ENCODE measurements at regions of chr20 and their contacts with region 1.

Region 1: GRCh38 chr20:407133-407952 is 756 bp upstream of the RBCK1 start:
- DNase-seq: peak; percentile 89 to 90
- H3K4me3 ChIP-seq: peak overlapping the region; percentile 45
- H3K4me3 Mint-ChIP-seq: peak overlapping the region; percentile 77
- H3K27ac Mint-ChIP-seq: peak overlapping the region; percentile 83
- H3K4me1 ChIP-seq: peaks cover 24% of the 10 kb centered on the region
- H3K4me1 Mint-ChIP-seq: peaks cover 22% of the 10 kb centered on the region
- H3K27me3 ChIP-seq: no peaks in the 10 kb centered on the region
- H3K27me3 Mint-ChIP-seq: no peaks in the 10 kb centered on the region
- CTCF ChIP-seq: peak; percentile 20 to 43

Region 2: DNA sequence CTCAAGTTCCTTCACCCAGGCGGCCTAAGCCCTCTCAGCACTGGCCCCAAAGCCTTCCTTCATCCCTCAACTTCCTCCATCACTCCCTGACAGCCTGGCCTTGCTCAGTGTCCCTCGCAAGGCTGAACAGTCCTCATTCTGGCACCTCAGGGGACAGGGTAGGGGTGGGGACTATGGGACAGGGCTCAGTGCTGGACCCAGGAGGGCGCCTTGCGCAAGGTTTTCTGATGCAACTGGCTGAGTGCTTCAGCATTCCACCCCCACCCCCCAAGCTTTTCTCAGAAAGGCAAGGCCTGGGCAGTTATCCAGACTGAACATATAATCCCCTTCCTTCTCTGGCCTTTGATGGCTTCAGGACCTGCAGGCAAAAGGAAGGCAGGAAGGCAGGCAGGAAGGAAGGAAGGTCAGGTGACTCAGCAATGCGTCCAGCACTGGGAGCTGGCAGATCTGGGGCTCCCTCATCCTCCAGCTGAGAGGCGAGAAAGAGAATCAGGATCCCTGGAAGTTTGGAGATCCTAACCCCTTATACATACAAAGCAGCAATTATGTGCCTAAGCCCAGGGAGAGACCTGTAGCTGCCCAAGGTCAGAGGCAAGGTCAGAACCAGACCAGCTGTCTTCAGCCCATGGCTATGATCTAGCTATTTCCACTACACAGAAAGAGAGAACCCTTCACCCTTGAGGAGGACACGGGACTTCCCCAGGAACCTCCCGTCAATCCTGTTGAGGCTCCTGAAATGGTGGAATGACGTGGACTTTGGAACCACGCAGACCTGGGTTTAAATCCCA is 35.4 kb before region 1 on chr20:
- CTCF ChIA-PET with region 1: interaction called, 5 read pairs
- POLR2A ChIA-PET with region 1: interaction called, 13 read pairs
- intact Hi-C with region 1: loop called (anchors 1 kb)
- DNase-seq: peak; percentile 96 to 98
- H3K4me3 ChIP-seq: no peak overlapping the region
- H3K4me3 Mint-ChIP-seq: peak overlapping the region; percentile 66
- H3K27ac Mint-ChIP-seq: peak overlapping the region; percentile 99
- H3K4me1 ChIP-seq: peaks cover 68% of the 10 kb centered on the region
- H3K4me1 Mint-ChIP-seq: peaks cover 60% of the 10 kb centered on the region
- H3K27me3 ChIP-seq: no peaks in the 10 kb centered on the region
- H3K27me3 Mint-ChIP-seq: no peaks in the 10 kb centered on the region
- CTCF ChIP-seq: no peak

Region 3: DNA sequence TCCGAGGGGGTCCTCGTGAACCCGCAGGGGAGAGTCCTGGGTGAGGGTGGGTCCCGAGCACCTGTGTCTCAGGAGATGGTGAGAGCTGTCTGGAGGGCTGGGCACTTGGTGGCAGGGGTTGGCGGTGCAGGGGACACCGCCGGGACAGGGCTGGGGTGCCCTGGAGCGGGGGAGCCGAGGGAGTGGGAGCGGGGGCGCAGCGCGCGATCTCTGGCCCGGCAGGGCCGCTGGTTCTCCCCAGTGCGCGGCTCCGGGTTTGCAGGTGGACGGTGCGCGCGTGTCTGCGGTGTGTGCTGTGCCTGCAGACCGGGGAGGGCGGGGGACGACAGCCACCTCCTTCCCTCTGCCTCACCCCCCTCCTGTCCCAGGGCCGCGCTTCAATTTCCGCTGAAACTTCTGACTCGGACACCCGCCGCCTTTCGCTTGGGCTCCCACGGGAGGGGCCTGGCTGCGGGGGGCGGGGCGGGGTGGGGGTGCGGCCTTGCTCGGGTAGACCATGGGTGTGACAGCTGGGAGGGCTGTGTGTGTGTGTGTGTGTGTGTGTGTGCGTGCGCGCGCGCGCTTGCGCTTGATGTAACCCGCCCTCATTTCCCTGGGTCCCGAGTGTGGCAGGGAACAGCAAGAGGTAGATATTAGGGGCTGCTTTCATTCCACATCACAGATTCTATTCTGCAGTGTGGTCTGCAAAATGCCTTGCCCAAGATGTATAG is 25.6 kb before region 1 on chr20:
- CTCF ChIA-PET with region 1: interaction called, 5 read pairs
- POLR2A ChIA-PET with region 1: interaction called, 17 read pairs
- intact Hi-C with region 1: loop called (anchors 1 kb)
- DNase-seq: peak; percentile 83 to 85
- H3K4me3 ChIP-seq: peak overlapping the region; percentile 97
- H3K4me3 Mint-ChIP-seq: peak overlapping the region; percentile 83
- H3K27ac Mint-ChIP-seq: peak overlapping the region; percentile 92
- H3K4me1 ChIP-seq: peaks cover 12% of the 10 kb centered on the region
- H3K4me1 Mint-ChIP-seq: peaks cover 19% of the 10 kb centered on the region
- H3K27me3 ChIP-seq: no peaks in the 10 kb centered on the region
- H3K27me3 Mint-ChIP-seq: no peaks in the 10 kb centered on the region
- CTCF ChIP-seq: no peak